CD4-positive, alpha-beta memory T cell (primary cell): ENCODE measurements at regions of chr6 and their contacts with region 1.

Region 1: GRCh38 chr6:227074-227782 is 65.1 kb upstream of the DUSP22 start:
- DNase-seq: no peak
- H3K4me3 ChIP-seq: no peak overlapping the region
- H3K4me3 Mint-ChIP-seq: no peak overlapping the region
- H3K27ac ChIP-seq: no peak overlapping the region
- H3K27ac Mint-ChIP-seq: no peak overlapping the region
- H3K4me1 ChIP-seq: peaks cover 24% of the 10 kb centered on the region
- H3K4me1 Mint-ChIP-seq: peaks cover 14 to 44% (median 32%) of the 10 kb centered on the region in 4 donors
- H3K27me3 ChIP-seq: no peaks in the 10 kb centered on the region
- H3K27me3 Mint-ChIP-seq: peaks cover 0 to 1% of the 10 kb centered on the region in 2 donors

Region 2: DNA sequence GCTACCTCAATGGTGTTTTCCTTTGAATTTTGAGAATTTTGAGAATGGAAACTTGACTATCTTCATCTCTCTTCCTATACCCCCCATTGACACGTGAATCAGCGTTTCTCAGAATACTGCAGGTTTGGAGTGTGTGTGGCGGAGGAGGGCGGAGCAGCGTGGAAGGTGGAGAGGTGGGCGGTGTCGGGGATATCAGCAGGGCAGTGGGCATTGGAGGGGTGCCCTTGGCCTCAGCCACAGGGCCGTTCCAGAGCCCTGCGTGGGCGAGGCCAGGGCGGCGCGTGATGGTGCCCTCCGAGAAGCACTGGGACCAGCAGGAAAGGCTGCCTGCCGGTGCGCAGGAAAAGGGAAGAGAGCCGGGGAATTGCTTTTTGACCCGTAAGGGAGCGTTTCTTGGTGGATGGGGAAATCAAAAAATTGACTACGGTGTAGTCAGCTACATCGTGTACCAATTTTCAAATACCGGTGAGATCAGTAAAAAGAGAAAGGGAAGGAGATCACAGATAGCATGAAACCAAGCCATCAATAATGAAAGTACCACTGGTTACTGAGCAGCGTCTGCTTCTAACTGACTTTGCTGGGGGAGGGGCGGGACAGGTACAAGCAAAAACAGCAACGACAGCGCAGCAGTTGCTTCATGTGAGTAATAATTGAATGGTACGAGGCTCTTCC is 17.7 kb before region 1 on chr6:
- CTCF ChIA-PET with region 1: interaction called, 3 read pairs
- POLR2A ChIA-PET with region 1: interaction called, 3 read pairs
- intact Hi-C with region 1: loop called (anchors 2 kb)
- DNase-seq: peak; percentile 44 to 69 (median 49)
- H3K4me3 ChIP-seq: peak overlapping the region; percentile 68 to 73
- H3K4me3 Mint-ChIP-seq: peak overlapping the region; percentile 87 to 99 (median 94)
- H3K27ac ChIP-seq: no peak overlapping the region
- H3K27ac Mint-ChIP-seq: peak overlapping the region; percentile 58 to 96 (median 89)
- H3K4me1 ChIP-seq: peaks cover 14% of the 10 kb centered on the region
- H3K4me1 Mint-ChIP-seq: peaks cover 11 to 26% (median 19%) of the 10 kb centered on the region in 4 donors
- H3K27me3 ChIP-seq: no peaks in the 10 kb centered on the region
- H3K27me3 Mint-ChIP-seq: peaks cover 0 to 4% of the 10 kb centered on the region in 2 donors

Region 3: GRCh38 chr6:217048-217659 is 10.1 kb before region 1 on chr6:
- CTCF ChIA-PET with region 1: interaction called, 22 read pairs
- POLR2A ChIA-PET with region 1: interaction called, 10 read pairs
- intact Hi-C with region 1: no loop called
- DNase-seq: peak in 1 of 5 donors; percentile 13
- H3K4me3 ChIP-seq: no peak overlapping the region
- H3K4me3 Mint-ChIP-seq: no peak overlapping the region
- H3K27ac ChIP-seq: no peak overlapping the region
- H3K27ac Mint-ChIP-seq: peak overlapping the region in 2 of 7 donors; percentile 3 to 44
- H3K4me1 ChIP-seq: peaks cover 20% of the 10 kb centered on the region
- H3K4me1 Mint-ChIP-seq: peaks cover 14 to 50% (median 30%) of the 10 kb centered on the region in 4 donors
- H3K27me3 ChIP-seq: no peaks in the 10 kb centered on the region
- H3K27me3 Mint-ChIP-seq: no peaks in the 10 kb centered on the region

Region 4: DNA sequence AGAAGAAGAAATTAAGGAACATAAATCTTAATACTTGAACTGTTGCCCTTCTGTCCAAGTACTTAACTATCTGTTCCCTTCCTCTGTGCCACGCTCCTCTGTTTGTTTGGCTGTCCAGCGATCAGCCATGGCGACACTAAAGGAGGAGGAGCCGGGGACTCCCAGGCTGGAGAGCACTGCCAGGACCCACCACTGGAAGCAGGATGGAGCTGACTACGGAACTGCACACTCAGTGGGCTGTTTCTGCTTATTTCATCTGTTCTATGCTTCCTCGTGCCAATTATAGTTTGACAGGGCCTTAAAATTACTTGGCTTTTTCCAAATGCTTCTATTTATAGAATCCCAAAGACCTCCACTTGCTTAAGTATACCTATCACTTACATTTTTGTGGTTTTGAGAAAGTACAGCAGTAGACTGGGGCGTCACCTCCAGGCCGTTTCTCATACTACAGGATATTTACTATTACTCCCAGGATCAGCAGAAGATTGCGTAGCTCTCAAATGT is 181.4 kb after region 1 on chr6:
- CTCF ChIA-PET with region 1: no interaction called
- POLR2A ChIA-PET with region 1: no interaction called
- intact Hi-C with region 1: no loop called
- DNase-seq: no peak
- H3K4me3 ChIP-seq: no peak overlapping the region
- H3K4me3 Mint-ChIP-seq: no peak overlapping the region
- H3K27ac ChIP-seq: no peak overlapping the region
- H3K27ac Mint-ChIP-seq: no peak overlapping the region
- H3K4me1 ChIP-seq: peaks cover 18% of the 10 kb centered on the region
- H3K4me1 Mint-ChIP-seq: peaks cover 14 to 22% (median 16%) of the 10 kb centered on the region in 4 donors
- H3K27me3 ChIP-seq: no peaks in the 10 kb centered on the region
- H3K27me3 Mint-ChIP-seq: peaks cover 0 to 1% of the 10 kb centered on the region in 2 donors